Activated CD8-positive, alpha-beta T cell treated with anti-CD3 and anti-CD28 coated beads, Interleukin-2, amount 10 ng/mL, durations not matched to agents 7 days and 5 days (primary cell): ENCODE measurements at regions of chr17 and their contacts with region 1.

Region 1: DNA sequence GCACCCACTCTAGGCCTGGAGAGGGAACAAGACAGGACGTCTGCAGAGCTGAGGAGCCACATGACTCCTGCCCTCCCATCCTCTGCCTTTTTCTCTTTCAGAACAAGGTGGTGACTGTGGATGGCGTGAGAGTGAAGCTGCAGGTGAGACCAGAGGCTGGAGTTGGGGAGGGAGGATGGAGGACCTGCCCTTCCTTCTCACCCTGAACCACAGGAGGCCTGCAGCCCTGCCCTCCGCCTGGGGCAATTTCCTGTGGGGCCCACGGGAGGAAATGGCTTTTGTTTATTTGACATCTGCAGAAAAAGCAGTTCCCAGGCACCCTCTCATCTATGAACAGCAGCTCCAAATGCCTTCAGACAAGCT is 5.1 kb downstream of the RAB37 start:
- DNase-seq: peak; percentile 85
- ATAC-seq: peak; percentile 32
- H3K4me3 Mint-ChIP-seq: peak overlapping the region; percentile 72
- H3K27ac Mint-ChIP-seq: peak overlapping the region; percentile 97
- H3K4me1 Mint-ChIP-seq: peaks cover 93% of the 10 kb centered on the region
- H3K27me3 Mint-ChIP-seq: no peaks in the 10 kb centered on the region

Region 2: GRCh38 chr17:74467221-74467951 is 274.7 kb before region 1 on chr17:
- CTCF ChIA-PET with region 1: no interaction called
- POLR2A ChIA-PET with region 1: no interaction called
- DNase-seq: no peak
- ATAC-seq: no peak
- H3K4me3 Mint-ChIP-seq: peak overlapping the region; percentile 20
- H3K27ac Mint-ChIP-seq: no peak overlapping the region
- H3K4me1 Mint-ChIP-seq: peaks cover 3% of the 10 kb centered on the region
- H3K27me3 Mint-ChIP-seq: peaks cover 15% of the 10 kb centered on the region

Region 3: DNA sequence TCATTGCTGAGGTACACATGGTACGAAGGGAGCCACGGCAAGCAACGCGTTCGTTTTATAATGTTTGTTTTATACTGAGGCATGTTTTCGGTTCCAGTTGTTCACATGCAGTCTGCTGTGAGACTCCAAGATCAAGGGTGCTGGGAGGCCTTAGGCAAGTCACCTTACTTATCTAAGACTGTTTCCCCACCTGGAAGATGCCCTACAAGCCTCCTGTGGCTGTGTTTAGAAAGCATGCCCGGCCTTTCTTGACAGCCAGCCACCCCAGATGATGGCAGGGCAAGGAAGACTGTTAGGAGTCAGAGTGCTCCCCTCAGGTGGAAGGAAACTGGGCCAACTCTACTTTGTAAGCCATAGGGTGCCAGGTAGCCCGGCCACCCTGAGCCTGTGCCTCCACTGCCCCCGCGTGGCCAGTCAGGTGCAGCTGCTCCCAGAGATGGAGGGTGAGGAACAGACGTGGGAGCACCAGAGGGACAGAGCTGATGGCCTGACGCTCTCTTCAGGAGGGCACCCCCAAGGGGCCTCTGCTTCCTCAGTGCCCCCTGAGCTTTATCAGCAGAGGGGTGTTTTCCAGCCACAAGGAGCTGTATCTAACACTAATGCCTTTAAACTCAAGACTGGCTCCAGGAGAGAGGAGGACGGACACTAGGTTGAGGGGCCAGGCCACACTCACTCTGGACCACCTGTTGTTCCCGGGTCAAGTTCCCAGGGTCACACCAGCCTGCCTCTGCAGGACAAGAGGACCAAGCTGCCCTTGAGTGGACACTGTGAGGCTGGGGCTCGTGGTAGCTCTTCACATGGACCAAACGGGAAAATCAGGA is 28.6 kb after region 1 on chr17:
- CTCF ChIA-PET with region 1: interaction called, 73 read pairs
- POLR2A ChIA-PET with region 1: interaction called, 9 read pairs
- DNase-seq: peak; percentile 77
- ATAC-seq: peak; percentile 78
- H3K4me3 Mint-ChIP-seq: no peak overlapping the region
- H3K27ac Mint-ChIP-seq: peak overlapping the region; percentile 61
- H3K4me1 Mint-ChIP-seq: peaks cover 46% of the 10 kb centered on the region
- H3K27me3 Mint-ChIP-seq: no peaks in the 10 kb centered on the region

Region 4: DNA sequence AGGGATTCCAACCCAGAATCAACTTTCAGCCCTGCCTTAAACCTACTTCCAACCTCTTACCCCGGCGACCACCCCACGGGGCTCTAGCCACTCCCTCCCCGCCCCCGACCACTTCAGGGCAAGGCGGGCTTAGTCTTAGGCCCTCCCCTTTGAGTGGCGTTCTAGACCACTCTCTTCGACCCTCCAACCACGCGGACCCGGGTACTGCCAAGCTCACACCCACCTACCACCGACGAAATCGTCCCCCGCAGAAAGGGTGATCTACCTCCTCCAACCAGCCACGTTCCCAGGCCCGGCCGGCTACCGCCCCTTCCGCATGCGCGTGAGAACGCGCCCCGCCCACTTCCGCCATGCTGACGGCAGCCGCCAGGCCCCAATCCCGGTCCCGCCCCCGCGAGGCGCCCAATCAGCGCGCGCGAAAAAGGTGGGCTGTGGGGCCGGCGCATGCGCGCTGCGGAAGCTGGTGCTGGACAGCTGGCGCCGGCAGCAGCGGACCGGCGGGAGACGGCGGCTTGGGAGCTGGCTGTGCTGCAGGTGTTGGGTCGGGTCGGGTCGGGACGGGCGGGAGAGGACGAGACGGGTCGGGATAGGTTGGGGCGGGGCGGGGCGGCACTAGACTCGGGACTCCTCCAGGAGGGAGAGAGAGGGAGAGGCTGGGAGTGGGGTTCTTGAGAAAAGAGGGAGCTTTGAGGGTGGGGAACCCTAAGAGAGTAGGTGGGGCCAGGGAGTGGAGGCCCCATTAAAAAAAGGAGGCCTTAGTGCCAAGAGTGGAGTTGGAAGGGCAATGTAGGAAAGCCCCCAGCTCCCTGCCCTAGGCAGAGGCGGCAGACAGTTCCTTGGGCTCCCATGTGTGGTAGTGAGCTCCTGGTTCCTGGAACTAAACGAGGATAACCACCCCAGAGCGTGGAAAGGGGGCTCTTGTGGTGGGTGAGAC is 34.2 kb after region 1 on chr17 and contains the start of gene NAT9:
- CTCF ChIA-PET with region 1: interaction called, 73 read pairs
- POLR2A ChIA-PET with region 1: interaction called, 9 read pairs
- DNase-seq: peak; percentile 99
- ATAC-seq: peak; percentile 83
- H3K4me3 Mint-ChIP-seq: peak within 1 kb of the TSS; percentile 97
- H3K27ac Mint-ChIP-seq: peak within 1 kb of the TSS; percentile 89
- H3K4me1 Mint-ChIP-seq: peaks cover 70% of the 10 kb centered on the region
- H3K27me3 Mint-ChIP-seq: no peaks in the 10 kb centered on the region
- total RNA-seq, gene NAT9: 28.3 to 30.7 TPM

Region 5: GRCh38 chr17:74790161-74791054 is 48.3 kb after region 1 on chr17:
- CTCF ChIA-PET with region 1: interaction called, 54 read pairs
- POLR2A ChIA-PET with region 1: interaction called, 3 read pairs
- DNase-seq: no peak
- ATAC-seq: peak; percentile 19
- H3K4me3 Mint-ChIP-seq: peak overlapping the region; percentile 39
- H3K27ac Mint-ChIP-seq: peak overlapping the region; percentile 68
- H3K4me1 Mint-ChIP-seq: peaks cover 47% of the 10 kb centered on the region
- H3K27me3 Mint-ChIP-seq: no peaks in the 10 kb centered on the region

Region 6: DNA sequence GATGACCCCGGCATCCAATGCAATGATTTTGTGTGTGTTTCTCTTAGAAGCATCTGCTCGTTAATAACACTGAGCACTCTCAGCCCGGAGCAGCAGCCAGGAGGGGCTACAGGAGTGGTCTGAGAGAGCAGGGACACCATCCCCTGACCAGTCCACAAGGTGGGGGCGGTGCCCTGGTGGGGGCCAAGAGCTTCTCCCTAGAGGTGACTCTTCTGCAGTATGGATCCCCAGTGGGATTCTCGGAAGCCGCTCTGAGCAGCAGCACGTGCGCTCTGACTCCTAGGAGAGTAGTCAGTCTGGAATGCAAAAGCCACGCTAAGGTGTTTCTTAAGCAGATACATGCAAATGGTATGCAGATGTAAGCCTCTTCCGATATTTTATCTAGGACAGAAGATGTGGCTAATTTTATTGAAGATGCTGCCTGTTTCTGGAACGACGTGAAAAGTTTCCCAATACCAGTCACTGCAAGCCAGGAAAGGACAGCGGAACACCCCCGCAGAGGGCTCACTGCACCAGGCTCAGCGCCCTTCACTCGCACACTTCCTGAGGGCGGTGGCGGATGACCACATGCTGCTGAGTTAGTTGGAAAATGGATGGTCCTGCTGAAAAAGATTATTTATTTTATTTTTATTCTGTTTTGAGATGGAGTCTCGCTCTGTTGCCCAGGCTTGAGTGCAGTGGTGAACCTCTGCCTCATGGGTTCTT is 141.1 kb after region 1 on chr17:
- CTCF ChIA-PET with region 1: no interaction called
- POLR2A ChIA-PET with region 1: no interaction called
- DNase-seq: no peak
- ATAC-seq: no peak
- H3K4me3 Mint-ChIP-seq: no peak overlapping the region
- H3K27ac Mint-ChIP-seq: no peak overlapping the region
- H3K4me1 Mint-ChIP-seq: no peaks in the 10 kb centered on the region
- H3K27me3 Mint-ChIP-seq: peaks cover 9% of the 10 kb centered on the region